ENCODE measurements at regions of chr3 and their contacts with region 1.

Region 1: GRCh38 chr3:15557511-15557946 is 36.0 kb upstream of the COLQ start:
- DNase-seq: peak; percentile 79
- H3K4me3 ChIP-seq: no peak overlapping the region
- H3K27ac ChIP-seq: no peak overlapping the region
- H3K4me1 ChIP-seq: no peaks in the 10 kb centered on the region
- H3K27me3 ChIP-seq: no peaks in the 10 kb centered on the region
- CTCF ChIP-seq: peak; percentile 67 to 72 (median 71)
- POLR2A ChIP-seq: no peak

Region 2: GRCh38 chr3:15409239-15410168 is 148.0 kb before region 1 on chr3:
- intact Hi-C with region 1: loop called (anchors 10 kb)
- DNase-seq: no peak
- H3K4me3 ChIP-seq: no peak overlapping the region
- H3K27ac ChIP-seq: no peak overlapping the region
- H3K4me1 ChIP-seq: peaks cover 4% of the 10 kb centered on the region
- H3K27me3 ChIP-seq: no peaks in the 10 kb centered on the region
- CTCF ChIP-seq: no peak
- POLR2A ChIP-seq: no peak

Region 3: GRCh38 chr3:15460891-15461531 is 96.5 kb before region 1 on chr3:
- intact Hi-C with region 1: no loop called
- DNase-seq: no peak
- H3K4me3 ChIP-seq: no peak overlapping the region
- H3K27ac ChIP-seq: no peak overlapping the region
- H3K4me1 ChIP-seq: no peaks in the 10 kb centered on the region
- H3K27me3 ChIP-seq: no peaks in the 10 kb centered on the region
- CTCF ChIP-seq: no peak
- POLR2A ChIP-seq: no peak

Region 4: DNA sequence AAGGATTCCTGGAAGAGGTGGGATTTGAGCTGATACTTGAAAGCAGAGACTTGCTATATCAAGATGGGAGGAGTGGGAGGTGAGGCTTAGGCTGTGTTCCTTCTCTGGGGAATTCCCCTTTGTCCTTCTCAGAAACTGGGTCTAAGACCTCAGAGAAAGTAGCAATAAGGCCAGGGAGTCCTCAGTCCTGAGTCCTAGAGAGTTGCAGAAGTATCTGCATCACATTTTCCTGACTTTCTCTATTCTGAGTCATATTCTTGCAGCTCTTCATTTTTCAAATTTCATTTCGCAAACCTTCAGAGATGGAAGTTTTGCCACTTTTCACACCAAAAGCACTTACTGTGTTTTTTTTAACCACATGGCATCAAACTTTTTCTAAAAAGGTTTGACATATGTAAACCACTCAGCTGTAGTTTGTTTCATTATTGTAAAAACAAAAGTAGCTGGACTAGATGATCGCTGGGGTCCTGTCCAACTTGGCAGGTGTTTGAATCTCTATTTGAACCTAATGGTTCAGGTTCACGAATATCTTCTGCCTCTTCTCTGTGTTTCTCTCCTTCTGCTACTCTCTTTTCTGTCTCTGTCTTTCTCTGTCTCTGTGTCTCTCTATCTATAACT is 57.3 kb before region 1 on chr3:
- intact Hi-C with region 1: no loop called
- DNase-seq: no peak
- H3K4me3 ChIP-seq: no peak overlapping the region
- H3K27ac ChIP-seq: no peak overlapping the region
- H3K4me1 ChIP-seq: peaks cover 22% of the 10 kb centered on the region
- H3K27me3 ChIP-seq: no peaks in the 10 kb centered on the region
- CTCF ChIP-seq: no peak
- POLR2A ChIP-seq: no peak

Region 5: GRCh38 chr3:15743587-15744009 is 186.1 kb after region 1 on chr3:
- intact Hi-C with region 1: no loop called
- DNase-seq: no peak
- H3K4me3 ChIP-seq: no peak overlapping the region
- H3K27ac ChIP-seq: peak overlapping the region; percentile 23 to 33
- H3K4me1 ChIP-seq: peaks cover 3% of the 10 kb centered on the region
- H3K27me3 ChIP-seq: no peaks in the 10 kb centered on the region
- CTCF ChIP-seq: no peak
- POLR2A ChIP-seq: no peak